Kidney (tissue), 22 donors: ENCODE measurements at regions of chr1 and their contacts with region 1.

Region 1: DNA sequence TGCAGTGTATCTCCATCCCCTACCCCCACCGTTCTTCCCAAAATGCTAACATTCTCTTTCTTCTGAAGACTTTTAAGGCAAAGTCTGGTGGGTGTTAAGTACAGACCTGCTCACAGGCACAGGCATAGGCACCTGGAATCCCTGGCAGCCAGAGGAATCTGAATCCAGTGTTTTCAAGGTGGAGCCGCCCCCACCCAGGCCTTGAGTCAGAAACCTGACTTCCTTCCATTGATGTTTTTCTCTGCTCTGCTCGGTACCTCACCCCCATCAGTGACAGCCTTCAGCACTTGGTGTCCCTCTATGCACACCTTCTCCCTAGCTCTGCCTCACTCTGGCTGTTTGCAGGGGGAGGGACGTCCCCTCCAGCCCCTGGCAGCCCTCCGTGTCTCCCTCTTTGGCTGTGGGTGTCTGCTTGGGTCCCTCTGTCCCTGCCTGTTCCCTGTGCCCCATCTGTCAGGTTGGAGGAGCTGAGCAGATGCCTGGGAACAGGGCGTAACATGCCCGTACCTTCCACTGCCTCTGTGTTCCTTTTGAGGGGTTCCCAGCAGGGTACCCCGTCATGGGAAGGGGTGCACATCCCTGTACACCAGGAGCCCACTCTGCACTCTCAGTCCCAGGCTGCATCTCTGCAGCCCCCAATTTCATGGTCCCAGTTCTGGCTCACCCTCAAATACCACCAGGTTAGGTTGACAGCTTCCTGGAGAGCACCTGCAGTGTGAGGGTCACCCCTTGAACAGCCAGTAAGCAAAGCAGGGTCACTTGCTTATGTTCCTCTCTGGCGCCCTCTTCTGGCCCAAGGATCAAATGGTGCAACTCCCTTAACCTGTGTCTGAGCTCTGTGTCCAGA is 6.7 kb downstream of the NCDN start:
- DNase-seq: peak; percentile 71 to 91 (median 81)
- H3K4me3 ChIP-seq: no peak overlapping the region
- H3K27ac ChIP-seq: no peak overlapping the region
- H3K4me1 ChIP-seq: peaks cover 0 to 5% (median 0%) of the 10 kb centered on the region in 3 donors
- H3K27me3 ChIP-seq: no peaks in the 10 kb centered on the region
- CTCF ChIP-seq: peak; percentile 74

Region 2: GRCh38 chr1:35390600-35391494 is 173.4 kb before region 1 on chr1:
- intact Hi-C with region 1: no loop called
- DNase-seq: peak in 2 of 5 donors; percentile 13 to 15
- H3K4me3 ChIP-seq: no peak overlapping the region
- H3K27ac ChIP-seq: no peak overlapping the region
- H3K4me1 ChIP-seq: no peaks in the 10 kb centered on the region
- H3K27me3 ChIP-seq: no peaks in the 10 kb centered on the region
- CTCF ChIP-seq: no peak

Region 3: DNA sequence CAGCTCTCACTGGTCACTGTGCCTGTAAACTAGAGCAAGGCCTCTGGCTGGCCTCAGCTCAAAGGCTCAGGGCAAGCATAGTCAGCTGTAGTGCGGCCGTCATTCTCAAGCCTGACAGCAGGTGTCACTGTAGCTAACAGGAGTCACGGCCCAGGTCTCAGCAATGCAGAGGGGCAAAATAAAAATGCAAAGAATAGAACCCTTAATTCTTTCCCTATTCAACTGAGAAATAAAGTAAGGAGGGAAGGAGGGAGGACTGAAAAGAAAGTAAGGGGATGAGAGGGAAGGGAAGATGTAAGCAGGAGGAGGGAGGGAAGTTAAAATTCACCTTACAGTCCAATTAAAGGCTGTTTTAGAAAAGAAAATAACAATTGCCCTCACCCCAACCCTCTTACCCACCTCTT is 113.1 kb before region 1 on chr1:
- intact Hi-C with region 1: loop called (anchors 5 kb)
- DNase-seq: peak; percentile 76 to 86 (median 82)
- H3K4me3 ChIP-seq: no peak overlapping the region
- H3K27ac ChIP-seq: no peak overlapping the region
- H3K4me1 ChIP-seq: peaks cover 0 to 16% (median 4%) of the 10 kb centered on the region in 3 donors
- H3K27me3 ChIP-seq: no peaks in the 10 kb centered on the region
- CTCF ChIP-seq: peak; percentile 91

Region 4: GRCh38 chr1:35519432-35519831 is 44.8 kb before region 1 on chr1:
- intact Hi-C with region 1: no loop called
- DNase-seq: no peak
- H3K4me3 ChIP-seq: no peak overlapping the region
- H3K27ac ChIP-seq: no peak overlapping the region
- H3K4me1 ChIP-seq: peaks cover 0 to 4% (median 0%) of the 10 kb centered on the region in 3 donors
- H3K27me3 ChIP-seq: no peaks in the 10 kb centered on the region
- CTCF ChIP-seq: no peak

Region 5: GRCh38 chr1:35691080-35691479 is 126.8 kb after region 1 on chr1:
- intact Hi-C with region 1: no loop called
- DNase-seq: peak in 1 of 5 donors; percentile 7
- H3K4me3 ChIP-seq: no peak overlapping the region
- H3K27ac ChIP-seq: no peak overlapping the region
- H3K4me1 ChIP-seq: no peaks in the 10 kb centered on the region
- H3K27me3 ChIP-seq: no peaks in the 10 kb centered on the region
- CTCF ChIP-seq: no peak

Region 6: GRCh38 chr1:35864813-35865212 is 300.6 kb after region 1 on chr1:
- intact Hi-C with region 1: no loop called
- DNase-seq: no peak
- H3K4me3 ChIP-seq: no peak overlapping the region
- H3K27ac ChIP-seq: no peak overlapping the region
- H3K4me1 ChIP-seq: peaks cover 0 to 2% (median 0%) of the 10 kb centered on the region in 3 donors
- H3K27me3 ChIP-seq: no peaks in the 10 kb centered on the region
- CTCF ChIP-seq: no peak